Activated T-helper 1 cell treated with anti-CD3 and anti-CD28 coated beads, Interleukin-12 subunit alpha, Interleukin-12 subunit beta, Interleukin-2, Interleukin-4 antibody, amounts not matched to agents 30 ng/mL and 10 ng/mL and 1 ng/mL, durations not matched to agents 14 hours and 24 hours and 36 hours (primary cell): ENCODE measurements at regions of chr13 and their contacts with region 1.

Region 1: DNA sequence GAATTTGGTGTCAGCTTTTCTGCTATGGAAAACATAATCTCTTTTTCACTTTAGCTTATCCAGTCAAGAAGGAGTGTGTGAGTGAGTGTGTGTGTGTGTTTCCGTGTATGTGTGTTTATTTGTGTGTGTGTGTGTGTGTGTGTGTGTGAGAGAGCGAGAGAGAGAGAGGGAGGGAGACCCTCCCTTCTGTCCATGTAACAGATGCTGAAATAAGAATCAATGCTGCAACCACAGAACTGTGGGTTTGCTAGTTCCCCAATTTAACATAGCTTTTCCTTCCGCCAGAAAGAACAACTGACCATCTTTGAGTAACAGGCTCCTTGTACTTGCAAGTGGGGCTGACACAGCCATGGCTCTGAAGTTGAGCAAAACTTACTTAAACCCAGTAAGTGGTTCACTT is 5.2 kb downstream of the LCP1 start:
- DNase-seq: no peak
- H3K4me3 Mint-ChIP-seq: peak overlapping the region; percentile 97
- H3K27ac Mint-ChIP-seq: peak overlapping the region; percentile 86
- H3K4me1 Mint-ChIP-seq: peaks cover 73% of the 10 kb centered on the region
- H3K27me3 Mint-ChIP-seq: no peaks in the 10 kb centered on the region

Region 2: DNA sequence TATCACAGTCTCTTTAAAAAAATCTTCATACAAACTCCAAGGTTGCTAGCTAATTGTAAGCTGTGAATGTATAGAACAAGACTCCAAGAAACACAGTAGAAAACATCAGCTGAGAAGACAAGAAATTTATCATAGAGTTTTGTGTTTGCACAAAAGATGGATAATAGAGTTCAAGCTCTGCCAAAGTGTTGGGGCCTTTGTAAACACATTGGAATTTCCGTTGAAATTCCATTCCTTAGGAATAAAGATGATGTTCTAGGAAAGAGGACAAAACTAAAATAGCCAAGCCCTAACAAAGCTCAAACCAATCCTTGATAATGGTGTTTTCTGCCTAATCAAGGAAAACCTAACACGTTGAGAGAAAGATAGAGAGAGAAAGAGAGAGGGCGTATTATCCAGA is 55.5 kb after region 1 on chr13:
- intact Hi-C with region 1: no loop called
- DNase-seq: no peak
- H3K4me3 Mint-ChIP-seq: no peak overlapping the region
- H3K27ac Mint-ChIP-seq: no peak overlapping the region
- H3K4me1 Mint-ChIP-seq: no peaks in the 10 kb centered on the region
- H3K27me3 Mint-ChIP-seq: peaks cover 10% of the 10 kb centered on the region

Region 3: GRCh38 chr13:46341112-46341711 is 164.5 kb after region 1 on chr13:
- intact Hi-C with region 1: loop called (anchors 1 kb)
- DNase-seq: no peak
- H3K4me3 Mint-ChIP-seq: peak overlapping the region; percentile 60
- H3K27ac Mint-ChIP-seq: peak overlapping the region; percentile 97
- H3K4me1 Mint-ChIP-seq: peaks cover 48% of the 10 kb centered on the region
- H3K27me3 Mint-ChIP-seq: no peaks in the 10 kb centered on the region

Region 4: GRCh38 chr13:46377554-46377953 is 200.8 kb after region 1 on chr13:
- intact Hi-C with region 1: no loop called
- DNase-seq: no peak
- H3K4me3 Mint-ChIP-seq: no peak overlapping the region
- H3K27ac Mint-ChIP-seq: no peak overlapping the region
- H3K4me1 Mint-ChIP-seq: peaks cover 7% of the 10 kb centered on the region
- H3K27me3 Mint-ChIP-seq: no peaks in the 10 kb centered on the region

Region 5: GRCh38 chr13:46679369-46680120 is 502.8 kb after region 1 on chr13:
- intact Hi-C with region 1: loop called (anchors 10 kb)
- DNase-seq: peak; percentile 38
- H3K4me3 Mint-ChIP-seq: no peak overlapping the region
- H3K27ac Mint-ChIP-seq: no peak overlapping the region
- H3K4me1 Mint-ChIP-seq: peaks cover 20% of the 10 kb centered on the region
- H3K27me3 Mint-ChIP-seq: no peaks in the 10 kb centered on the region

Region 6: DNA sequence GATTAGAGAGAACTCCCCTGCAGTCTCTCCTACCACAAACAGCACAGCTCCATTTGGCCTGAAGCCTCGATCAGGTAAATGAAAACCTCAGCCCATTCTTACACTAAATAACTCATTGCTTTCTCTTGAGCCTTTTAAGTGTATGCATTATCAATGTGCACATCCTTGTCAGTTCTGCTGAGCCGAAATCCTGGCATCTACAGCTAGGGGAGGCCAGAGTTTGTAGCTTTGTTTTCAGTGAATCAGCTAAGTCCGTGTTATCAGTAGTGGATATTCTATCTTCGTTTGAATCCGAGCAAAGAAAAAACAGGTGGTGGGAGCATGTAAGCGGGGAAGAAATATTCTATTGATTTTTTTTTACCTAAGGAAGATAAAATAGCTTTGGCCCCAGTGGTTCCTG is 535.8 kb after region 1 on chr13:
- intact Hi-C with region 1: no loop called
- DNase-seq: no peak
- H3K4me3 Mint-ChIP-seq: no peak overlapping the region
- H3K27ac Mint-ChIP-seq: no peak overlapping the region
- H3K4me1 Mint-ChIP-seq: no peaks in the 10 kb centered on the region
- H3K27me3 Mint-ChIP-seq: no peaks in the 10 kb centered on the region

Region 7: DNA sequence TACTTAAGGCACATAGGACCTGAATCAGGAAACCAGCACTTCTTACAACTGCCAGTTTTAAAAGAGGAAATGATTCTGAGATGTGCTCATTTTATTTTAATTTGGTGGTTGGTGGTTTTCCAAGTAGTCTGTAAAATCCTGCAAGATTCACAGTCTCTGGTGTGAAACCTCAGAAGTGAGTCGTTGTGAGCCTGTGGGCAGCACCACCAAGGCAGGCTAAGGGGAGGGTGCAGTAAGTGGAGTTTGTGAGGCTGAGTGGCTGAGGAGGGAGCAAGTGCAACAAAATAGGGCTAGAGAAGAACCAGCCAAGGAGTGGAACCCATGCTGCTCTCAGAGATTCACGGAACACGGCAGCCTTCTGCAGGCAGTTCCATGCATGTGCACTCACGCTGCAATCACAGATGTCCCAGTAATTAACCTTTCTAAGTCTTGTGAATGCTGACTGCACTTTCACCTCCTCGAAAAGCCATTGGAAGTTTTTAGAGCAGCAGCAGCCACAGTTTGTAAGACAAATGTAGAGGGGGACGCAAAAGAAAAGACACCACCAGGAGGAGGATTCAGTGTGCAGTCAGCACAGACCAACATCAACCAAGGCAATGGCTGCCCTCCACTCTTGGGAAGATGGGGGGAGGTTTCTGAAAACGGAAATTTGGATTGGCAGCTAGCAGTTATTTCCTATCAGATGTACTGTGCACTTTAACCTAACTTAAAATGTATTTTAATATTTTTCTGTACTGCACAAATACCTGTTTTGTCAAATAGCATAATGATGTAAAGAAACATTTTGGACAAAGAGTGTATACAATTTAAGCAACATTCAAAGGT is 575.3 kb after region 1 on chr13:
- intact Hi-C with region 1: loop called (anchors 5 kb)
- DNase-seq: peak; percentile 66
- H3K4me3 Mint-ChIP-seq: peak overlapping the region; percentile 5
- H3K27ac Mint-ChIP-seq: peak overlapping the region; percentile 69
- H3K4me1 Mint-ChIP-seq: peaks cover 47% of the 10 kb centered on the region
- H3K27me3 Mint-ChIP-seq: no peaks in the 10 kb centered on the region